HepG2 (cell line): ENCODE measurements at regions of chr2 and their contacts with region 1.

Region 1: GRCh38 chr2:164737612-164738081 is 104.0 kb downstream of the COBLL1 start:
- DNase-seq: peak; percentile 82
- ATAC-seq: peak; percentile 92
- H3K4me3 ChIP-seq: no peak overlapping the region
- H3K27ac ChIP-seq: peak overlapping the region; percentile 22
- H3K4me1 ChIP-seq: peaks cover 82% of the 10 kb centered on the region
- H3K27me3 ChIP-seq: no peaks in the 10 kb centered on the region
- CTCF ChIP-seq: peak; percentile 93
- EP300 ChIP-seq: no peak
- POLR2A ChIP-seq: no peak
- RAD21 ChIP-seq: peak; percentile 93

Region 2: GRCh38 chr2:164910101-164910899 is 172.7 kb after region 1 on chr2:
- CTCF ChIA-PET with region 1: interaction called, 50 read pairs
- POLR2A ChIA-PET with region 1: interaction called, 4 read pairs
- in situ Hi-C with region 1: loop called (anchors 5 kb)
- intact Hi-C with region 1: loop called (anchors 1 kb)
- DNase-seq: peak; percentile 63
- ATAC-seq: peak; percentile 70
- H3K4me3 ChIP-seq: no peak overlapping the region
- H3K27ac ChIP-seq: peak overlapping the region; percentile 60
- H3K4me1 ChIP-seq: peaks cover 58% of the 10 kb centered on the region
- H3K27me3 ChIP-seq: no peaks in the 10 kb centered on the region
- CTCF ChIP-seq: no peak
- EP300 ChIP-seq: no peak
- POLR2A ChIP-seq: no peak
- RAD21 ChIP-seq: no peak

Region 3: GRCh38 chr2:164917296-164917903 is 179.8 kb after region 1 on chr2:
- CTCF ChIA-PET with region 1: interaction called, 50 read pairs
- POLR2A ChIA-PET with region 1: interaction called, 4 read pairs
- in situ Hi-C with region 1: loop called (anchors 5 kb)
- intact Hi-C with region 1: loop called (anchors 1 kb)
- DNase-seq: peak; percentile 74
- ATAC-seq: peak; percentile 61
- H3K4me3 ChIP-seq: no peak overlapping the region
- H3K27ac ChIP-seq: no peak overlapping the region
- H3K4me1 ChIP-seq: peaks cover 56% of the 10 kb centered on the region
- H3K27me3 ChIP-seq: no peaks in the 10 kb centered on the region
- CTCF ChIP-seq: peak; percentile 90
- EP300 ChIP-seq: 0 out of 4 replicates have a peak, but pooled peaks of 1 of the 2 experiments have one; percentile 5
- POLR2A ChIP-seq: no peak
- RAD21 ChIP-seq: peak; percentile 93

Region 4: DNA sequence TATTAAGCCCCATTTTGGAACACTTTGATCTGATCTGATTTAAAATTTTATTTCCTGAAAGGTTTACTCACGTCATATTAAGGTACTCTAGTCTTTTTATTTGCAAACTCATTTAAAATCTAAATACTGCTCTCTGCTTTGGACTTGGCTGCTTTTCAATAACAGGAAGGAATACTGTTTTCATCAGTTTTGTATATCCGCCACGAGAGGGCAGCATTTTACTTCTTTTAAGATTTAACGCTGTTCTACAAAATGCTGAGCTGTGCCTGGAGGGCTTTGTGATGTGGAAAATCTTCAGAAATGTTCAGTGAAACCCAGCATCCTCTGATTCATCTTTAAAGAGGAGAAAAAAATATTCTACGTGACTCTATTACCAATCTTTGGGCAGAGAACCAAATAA is 255.2 kb after region 1 on chr2:
- CTCF ChIA-PET with region 1: interaction called, 6 read pairs
- POLR2A ChIA-PET with region 1: no interaction called
- in situ Hi-C with region 1: no loop called
- intact Hi-C with region 1: loop called (anchors 2 kb)
- DNase-seq: peak; percentile 80
- ATAC-seq: peak; percentile 84
- H3K4me3 ChIP-seq: no peak overlapping the region
- H3K27ac ChIP-seq: no peak overlapping the region
- H3K4me1 ChIP-seq: no peaks in the 10 kb centered on the region
- H3K27me3 ChIP-seq: no peaks in the 10 kb centered on the region
- CTCF ChIP-seq: peak; percentile 73
- EP300 ChIP-seq: no peak
- POLR2A ChIP-seq: no peak
- RAD21 ChIP-seq: 0 out of 2 replicates have a peak, but pooled peaks have one; percentile 20

Region 5: GRCh38 chr2:165203689-165204559 is 466.3 kb after region 1 on chr2 and contains the start of gene SCN3A:
- CTCF ChIA-PET with region 1: no interaction called
- POLR2A ChIA-PET with region 1: no interaction called
- in situ Hi-C with region 1: no loop called
- intact Hi-C with region 1: loop called (anchors 10 kb)
- DNase-seq: peak; percentile 54
- ATAC-seq: peak; percentile 83
- H3K4me3 ChIP-seq: no peak within 1 kb of the TSS
- H3K27ac ChIP-seq: no peak within 1 kb of the TSS
- H3K4me1 ChIP-seq: no peaks in the 10 kb centered on the region
- H3K27me3 ChIP-seq: no peaks in the 10 kb centered on the region
- CTCF ChIP-seq: peak; percentile 85
- EP300 ChIP-seq: no peak
- POLR2A ChIP-seq: no peak
- RAD21 ChIP-seq: 0 out of 2 replicates have a peak, but pooled peaks have one; percentile 23
- total RNA-seq, gene SCN3A: not detected in 2 replicates

Region 6: GRCh38 chr2:165293440-165294353 is 556.0 kb after region 1 on chr2:
- CTCF ChIA-PET with region 1: no interaction called
- POLR2A ChIA-PET with region 1: no interaction called
- in situ Hi-C with region 1: no loop called
- intact Hi-C with region 1: loop called (anchors 5 kb)
- DNase-seq: peak; percentile 81
- ATAC-seq: peak; percentile 100
- H3K4me3 ChIP-seq: no peak overlapping the region
- H3K27ac ChIP-seq: no peak overlapping the region
- H3K4me1 ChIP-seq: no peaks in the 10 kb centered on the region
- H3K27me3 ChIP-seq: no peaks in the 10 kb centered on the region
- CTCF ChIP-seq: peak; percentile 83
- EP300 ChIP-seq: no peak
- POLR2A ChIP-seq: no peak
- RAD21 ChIP-seq: no peak